ENCODE measurements at regions of chr5 and their contacts with region 1.

Region 1: DNA sequence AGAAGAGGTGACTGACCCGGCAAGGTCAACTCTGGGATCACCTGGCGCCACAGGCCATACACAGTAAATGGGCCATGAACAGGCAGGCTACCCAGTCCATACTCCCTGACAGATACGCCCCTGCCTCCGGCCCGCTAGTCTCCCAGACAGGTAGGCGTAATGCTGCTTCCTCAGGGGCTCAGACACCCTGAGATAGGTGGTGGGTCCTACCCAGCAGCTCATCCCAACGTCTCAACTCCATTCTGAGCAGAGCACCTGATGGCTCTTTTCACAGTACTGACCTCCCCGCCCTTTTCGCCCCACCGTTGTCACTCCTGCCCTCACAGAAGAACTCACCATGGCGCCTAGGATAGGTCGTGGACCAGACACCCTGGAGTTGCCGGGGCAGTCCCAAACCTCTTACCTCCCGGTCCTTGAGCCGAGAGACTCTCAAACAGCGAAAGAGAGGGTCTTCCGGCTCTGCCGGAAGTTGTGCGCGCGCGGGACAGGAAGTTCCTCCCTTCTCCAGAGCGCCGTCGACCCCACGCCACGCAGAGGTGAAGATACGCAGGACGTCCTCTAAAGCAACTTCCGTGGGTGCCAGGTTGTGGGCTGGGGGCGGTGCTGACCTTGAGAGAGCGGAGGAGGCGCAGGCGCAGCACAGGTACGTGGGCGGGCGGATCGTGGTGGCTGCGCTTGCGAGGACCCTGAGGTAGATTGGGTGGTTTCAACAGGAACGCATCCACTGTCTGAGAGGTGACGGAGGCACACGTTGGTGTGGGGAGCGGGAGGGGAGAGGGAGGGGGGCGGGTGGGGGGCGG is at the start of gene TMEM161B:
- DNase-seq: peak; percentile 95
- H3K4me3 Mint-ChIP-seq: peak within 1 kb of the TSS; percentile 97
- H3K27ac Mint-ChIP-seq: peak within 1 kb of the TSS; percentile 94
- H3K4me1 Mint-ChIP-seq: peaks cover 45% of the 10 kb centered on the region
- H3K27me3 Mint-ChIP-seq: no peaks in the 10 kb centered on the region
- total RNA-seq, gene TMEM161B: 21.2 to 22.9 TPM

Region 2: DNA sequence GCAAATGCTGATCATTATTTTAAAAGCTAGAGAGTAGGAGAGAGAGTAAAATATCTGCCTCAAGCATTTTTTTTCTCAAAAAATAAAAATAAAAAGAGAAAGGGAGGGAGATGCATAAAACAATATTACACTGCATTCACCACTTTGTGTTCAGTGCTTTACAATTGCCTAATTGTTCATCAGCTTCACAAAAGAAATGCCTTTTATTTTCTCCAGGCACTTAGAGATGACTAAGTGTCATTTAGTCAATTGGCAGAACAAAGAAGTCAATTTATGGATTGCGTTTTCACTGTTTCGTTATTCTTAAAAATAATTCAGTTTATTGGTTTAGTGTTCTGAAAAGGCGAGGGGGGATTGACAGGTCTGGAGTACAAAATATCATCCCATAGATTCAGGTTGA is 623.4 kb before region 1 on chr5:
- CTCF ChIA-PET with region 1: no interaction called
- POLR2A ChIA-PET with region 1: no interaction called
- intact Hi-C with region 1: no loop called
- DNase-seq: no peak
- H3K4me3 Mint-ChIP-seq: no peak overlapping the region
- H3K27ac Mint-ChIP-seq: no peak overlapping the region
- H3K4me1 Mint-ChIP-seq: no peaks in the 10 kb centered on the region
- H3K27me3 Mint-ChIP-seq: no peaks in the 10 kb centered on the region

Region 3: DNA sequence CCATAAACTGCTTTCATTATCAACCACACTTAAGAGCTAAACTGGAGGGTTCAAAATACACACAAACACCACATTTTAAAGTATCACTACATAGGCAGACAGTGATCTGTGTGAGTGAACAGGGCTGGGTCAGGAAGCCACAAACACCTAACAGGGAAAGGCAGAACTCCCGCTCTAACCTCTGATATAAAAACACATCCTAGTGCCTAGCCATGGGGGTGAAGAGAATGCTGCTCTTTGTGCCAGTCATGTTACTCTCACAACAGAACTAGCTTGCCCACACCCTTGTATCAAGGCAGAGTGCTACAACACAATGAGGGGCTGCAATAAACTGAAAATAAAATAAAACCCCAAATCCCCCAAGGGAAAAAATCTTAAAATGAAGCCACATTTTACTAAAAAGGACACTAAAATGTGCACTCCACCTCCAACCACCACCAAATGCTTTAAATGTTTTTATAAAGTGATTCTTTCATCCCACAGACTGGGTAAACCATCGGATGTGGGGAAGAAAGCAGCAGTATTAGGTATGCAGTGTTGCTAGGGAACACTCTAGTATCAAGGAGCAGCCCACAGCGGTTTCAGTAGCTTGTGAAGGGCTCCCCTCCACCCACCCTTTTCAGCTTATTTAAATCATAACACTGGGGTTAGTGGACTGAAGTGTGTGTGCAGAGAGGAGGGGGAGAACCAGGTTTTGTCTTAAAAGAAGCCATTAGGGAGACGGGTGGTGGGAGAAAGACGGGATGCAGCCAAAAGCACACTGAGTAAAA is 64.4 kb before region 1 on chr5:
- CTCF ChIA-PET with region 1: no interaction called
- POLR2A ChIA-PET with region 1: no interaction called
- intact Hi-C with region 1: loop called (anchors 1 kb)
- DNase-seq: peak; percentile 68
- H3K4me3 Mint-ChIP-seq: peak overlapping the region; percentile 9
- H3K27ac Mint-ChIP-seq: peak overlapping the region; percentile 76
- H3K4me1 Mint-ChIP-seq: peaks cover 15% of the 10 kb centered on the region
- H3K27me3 Mint-ChIP-seq: no peaks in the 10 kb centered on the region

Region 4: GRCh38 chr5:88251048-88251711 is 17.4 kb before region 1 on chr5:
- CTCF ChIA-PET with region 1: no interaction called
- POLR2A ChIA-PET with region 1: no interaction called
- intact Hi-C with region 1: loop called (anchors 1 kb)
- DNase-seq: peak; percentile 43
- H3K4me3 Mint-ChIP-seq: no peak overlapping the region
- H3K27ac Mint-ChIP-seq: peak overlapping the region; percentile 73
- H3K4me1 Mint-ChIP-seq: peaks cover 62% of the 10 kb centered on the region
- H3K27me3 Mint-ChIP-seq: no peaks in the 10 kb centered on the region

Region 5: DNA sequence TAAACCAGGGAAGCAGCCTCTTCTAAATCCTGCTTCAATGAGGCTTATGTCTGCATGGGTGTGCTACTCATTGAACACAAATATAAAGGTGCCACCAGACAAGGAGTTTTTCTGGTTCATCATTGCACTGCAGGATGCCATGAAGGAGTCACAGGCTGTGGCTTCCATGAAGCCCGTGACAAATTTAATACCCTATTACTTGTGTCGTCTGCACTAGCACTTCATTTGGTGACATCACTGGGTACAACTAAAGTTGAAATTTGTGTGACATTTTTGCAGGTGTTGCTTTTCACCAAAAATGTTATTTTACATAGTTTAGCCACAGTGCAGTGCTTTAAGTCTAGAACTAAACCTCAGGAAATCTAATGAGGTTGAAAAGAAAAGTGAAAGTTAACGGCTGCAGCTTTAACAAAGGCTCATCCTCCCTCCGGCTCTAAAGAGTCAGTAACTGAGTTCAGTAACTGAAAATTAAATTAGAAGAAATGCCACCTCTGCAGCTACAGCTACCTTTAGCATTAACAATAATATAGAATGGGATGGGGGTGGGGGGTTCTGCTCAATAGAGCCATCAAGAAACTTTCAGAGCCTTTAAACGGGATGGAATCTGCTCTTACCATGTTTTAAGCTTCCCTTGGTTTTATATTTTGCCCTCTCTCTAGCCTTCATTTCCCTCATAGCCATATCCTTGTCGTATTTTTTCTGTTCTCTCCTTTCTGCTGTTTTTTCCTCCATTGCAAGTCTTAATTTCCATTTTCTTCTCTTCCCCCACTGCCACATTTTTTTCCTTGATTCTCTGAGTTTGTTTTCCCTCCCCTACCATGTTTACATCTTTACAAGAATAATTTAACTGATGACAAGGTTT is 233.8 kb after region 1 on chr5:
- CTCF ChIA-PET with region 1: no interaction called
- POLR2A ChIA-PET with region 1: no interaction called
- intact Hi-C with region 1: loop called (anchors 5 kb)
- DNase-seq: peak; percentile 12
- H3K4me3 Mint-ChIP-seq: peak overlapping the region; percentile 77
- H3K27ac Mint-ChIP-seq: peak overlapping the region; percentile 58
- H3K4me1 Mint-ChIP-seq: peaks cover 12% of the 10 kb centered on the region
- H3K27me3 Mint-ChIP-seq: no peaks in the 10 kb centered on the region